IMR-90 (cell line): ENCODE measurements at regions of chr6 and their contacts with region 1.

Region 1: DNA sequence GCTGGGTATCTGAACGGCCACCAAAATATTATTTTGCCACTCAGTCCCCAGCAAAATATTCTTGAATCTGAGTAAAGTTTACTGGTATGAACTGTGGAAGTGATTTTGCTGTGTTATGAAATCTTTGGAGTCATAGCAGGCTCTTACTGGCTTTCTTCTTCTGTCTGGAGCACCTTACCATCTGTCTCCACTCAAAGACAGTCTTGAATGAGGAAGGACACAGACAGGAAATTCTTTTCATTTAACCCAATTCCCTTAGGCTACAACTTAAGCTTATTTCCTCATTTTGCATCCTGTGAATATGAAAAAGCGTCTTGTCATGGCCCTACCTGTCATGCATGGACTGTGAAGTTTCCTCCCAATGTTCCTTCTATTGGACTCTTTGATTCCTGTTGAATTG is 24.7 kb downstream of the FNDC1 start:
- DNase-seq: no peak
- ATAC-seq: no peak
- H3K4me3 ChIP-seq: no peak overlapping the region
- H3K27ac ChIP-seq: no peak overlapping the region
- H3K4me1 ChIP-seq: no peaks in the 10 kb centered on the region
- H3K27me3 ChIP-seq: no peaks in the 10 kb centered on the region
- CTCF ChIP-seq: no peak
- POLR2A ChIP-seq: no peak
- RAD21 ChIP-seq: no peak

Region 2: DNA sequence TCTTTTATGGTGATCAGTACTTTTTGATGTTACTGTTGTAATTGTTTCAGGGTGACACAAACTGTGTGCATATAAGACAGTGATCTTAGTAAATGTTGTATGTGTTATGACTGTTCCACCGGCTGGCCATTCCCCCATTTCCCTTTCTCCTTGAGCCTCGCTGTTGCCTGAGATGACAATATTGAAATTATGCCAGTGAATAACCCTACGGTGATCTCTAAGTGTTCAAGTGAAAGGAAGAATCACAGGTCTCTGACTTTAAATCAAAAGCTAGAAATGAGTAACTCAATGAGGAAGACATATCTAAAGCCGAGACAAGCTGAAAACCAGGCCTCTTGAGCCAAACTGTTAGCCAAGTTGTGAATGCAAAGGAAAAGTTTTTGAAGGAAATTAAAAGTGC is 849.4 kb before region 1 on chr6:
- CTCF ChIA-PET with region 1: no interaction called
- POLR2A ChIA-PET with region 1: no interaction called
- dilution Hi-C with region 1: no loop called
- in situ Hi-C with region 1: no loop called
- intact Hi-C with region 1: no loop called
- DNase-seq: no peak
- ATAC-seq: no peak
- H3K4me3 ChIP-seq: no peak overlapping the region
- H3K27ac ChIP-seq: no peak overlapping the region
- H3K4me1 ChIP-seq: peaks cover 2% of the 10 kb centered on the region; the same call in 1 of the 2 replicates
- H3K27me3 ChIP-seq: no peaks in the 10 kb centered on the region
- CTCF ChIP-seq: no peak
- POLR2A ChIP-seq: no peak
- RAD21 ChIP-seq: no peak

Region 3: GRCh38 chr6:159152782-159153181 is 41.1 kb before region 1 on chr6:
- CTCF ChIA-PET with region 1: no interaction called
- POLR2A ChIA-PET with region 1: no interaction called
- dilution Hi-C with region 1: no loop called
- in situ Hi-C with region 1: no loop called
- intact Hi-C with region 1: loop called (anchors 1 kb)
- DNase-seq: no peak
- ATAC-seq: no peak
- H3K4me3 ChIP-seq: no peak overlapping the region
- H3K27ac ChIP-seq: no peak overlapping the region
- H3K4me1 ChIP-seq: no peaks in the 10 kb centered on the region
- H3K27me3 ChIP-seq: peaks cover 3% of the 10 kb centered on the region; the same call in 1 of the 2 replicates
- CTCF ChIP-seq: no peak
- POLR2A ChIP-seq: no peak
- RAD21 ChIP-seq: no peak

Region 4: DNA sequence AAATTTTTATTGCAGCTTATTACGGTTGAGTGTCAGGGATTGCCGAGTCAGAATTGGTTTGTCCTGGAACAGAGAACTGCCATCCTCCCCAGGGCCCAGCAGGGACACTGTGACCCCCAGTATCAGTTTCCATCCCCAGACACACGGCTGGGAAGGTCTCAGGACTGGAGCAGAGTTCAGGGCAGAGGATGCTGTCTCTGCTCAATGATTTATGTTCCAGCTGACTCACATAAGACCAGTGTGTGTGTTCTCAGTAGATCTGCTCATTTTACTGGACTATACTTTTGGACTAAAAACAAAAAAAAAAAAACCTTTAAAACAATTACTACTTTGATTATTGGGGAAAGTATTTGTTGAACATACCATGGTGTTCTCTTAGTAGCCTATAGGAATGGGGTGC is 19.5 kb after region 1 on chr6:
- CTCF ChIA-PET with region 1: no interaction called
- POLR2A ChIA-PET with region 1: no interaction called
- dilution Hi-C with region 1: no loop called
- in situ Hi-C with region 1: no loop called
- intact Hi-C with region 1: no loop called
- DNase-seq: no peak
- ATAC-seq: no peak
- H3K4me3 ChIP-seq: no peak overlapping the region
- H3K27ac ChIP-seq: no peak overlapping the region
- H3K4me1 ChIP-seq: no peaks in the 10 kb centered on the region
- H3K27me3 ChIP-seq: no peaks in the 10 kb centered on the region; the same call in 1 of the 2 replicates
- CTCF ChIP-seq: no peak
- POLR2A ChIP-seq: no peak
- RAD21 ChIP-seq: no peak

Region 5: DNA sequence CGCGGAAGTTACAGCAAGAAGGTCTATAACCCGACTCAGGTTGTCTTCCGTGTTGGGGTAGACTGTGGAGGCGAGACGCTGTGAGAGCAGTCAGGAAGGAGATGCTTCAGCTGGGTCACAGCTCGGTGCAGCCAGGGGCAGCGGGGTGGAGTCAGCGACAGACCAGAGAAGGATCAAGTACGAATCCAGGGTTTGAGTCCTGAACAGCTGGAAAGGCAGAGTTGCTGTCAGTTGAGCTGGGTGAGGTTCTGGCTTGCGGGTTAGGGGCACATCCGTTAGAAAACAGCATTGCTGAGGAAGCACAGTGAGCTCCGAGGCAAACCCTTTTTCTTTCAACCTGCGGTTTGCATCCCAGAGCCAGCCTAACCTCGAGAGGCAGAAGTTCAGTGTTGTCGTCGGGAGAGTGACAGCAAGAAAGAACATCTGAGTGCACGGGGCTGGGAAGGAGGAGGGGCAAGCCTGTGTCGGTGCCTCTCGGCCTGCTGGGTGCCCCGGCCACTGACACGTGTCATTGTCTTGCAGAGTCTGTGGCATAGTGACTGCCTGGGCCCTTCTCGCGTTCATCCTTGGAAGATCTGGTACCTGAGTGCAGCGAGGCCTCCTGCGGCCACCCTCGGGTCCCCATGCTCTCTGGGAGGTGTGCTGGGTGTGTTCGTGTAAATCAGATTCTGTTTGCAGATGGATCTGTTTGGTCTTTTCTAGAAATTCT is 626.2 kb after region 1 on chr6:
- CTCF ChIA-PET with region 1: no interaction called
- POLR2A ChIA-PET with region 1: no interaction called
- dilution Hi-C with region 1: no loop called
- in situ Hi-C with region 1: loop called (anchors 25 kb)
- intact Hi-C with region 1: no loop called
- DNase-seq: no peak
- ATAC-seq: no peak
- H3K4me3 ChIP-seq: no peak overlapping the region
- H3K27ac ChIP-seq: no peak overlapping the region
- H3K4me1 ChIP-seq: peaks cover 2% of the 10 kb centered on the region; the same call in 1 of the 2 replicates
- H3K27me3 ChIP-seq: peaks cover 30% of the 10 kb centered on the region
- CTCF ChIP-seq: no peak
- POLR2A ChIP-seq: no peak
- RAD21 ChIP-seq: no peak